ENCODE measurements at regions of chr17 and their contacts with region 1.

Region 1: DNA sequence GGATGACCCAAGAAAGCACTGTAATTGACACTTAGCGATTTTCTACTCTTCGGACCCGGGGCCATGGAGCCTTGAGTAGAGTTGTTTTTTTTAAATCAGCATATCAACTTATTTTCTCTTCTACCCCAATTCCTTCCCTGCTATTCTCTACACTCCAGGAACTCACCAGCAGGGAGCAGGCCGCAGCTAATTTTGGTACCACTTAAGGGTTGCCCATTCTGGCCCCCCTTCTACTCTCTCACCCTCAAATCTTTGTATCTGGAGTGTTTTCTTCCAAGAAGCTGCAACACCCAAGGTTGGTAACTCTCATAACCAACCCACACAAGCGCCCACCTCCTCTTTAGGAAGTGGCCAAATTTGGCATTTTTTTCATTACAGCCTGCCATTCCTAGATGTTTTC is 5.5 kb upstream of the ERAL1 start:
- DNase-seq: no peak
- H3K4me3 ChIP-seq: no peak overlapping the region
- H3K27ac ChIP-seq: no peak overlapping the region
- H3K4me1 ChIP-seq: no peaks in the 10 kb centered on the region; a peak in 1 of 7 replicates
- H3K27me3 ChIP-seq: no peaks in the 10 kb centered on the region
- CTCF ChIP-seq: peak; percentile 1 to 36 (median 26); a peak in 3 of 4 replicates
- EP300 ChIP-seq: no peak
- POLR2A ChIP-seq: no peak
- RAD21 ChIP-seq: peak; percentile 31 to 37

Region 2: DNA sequence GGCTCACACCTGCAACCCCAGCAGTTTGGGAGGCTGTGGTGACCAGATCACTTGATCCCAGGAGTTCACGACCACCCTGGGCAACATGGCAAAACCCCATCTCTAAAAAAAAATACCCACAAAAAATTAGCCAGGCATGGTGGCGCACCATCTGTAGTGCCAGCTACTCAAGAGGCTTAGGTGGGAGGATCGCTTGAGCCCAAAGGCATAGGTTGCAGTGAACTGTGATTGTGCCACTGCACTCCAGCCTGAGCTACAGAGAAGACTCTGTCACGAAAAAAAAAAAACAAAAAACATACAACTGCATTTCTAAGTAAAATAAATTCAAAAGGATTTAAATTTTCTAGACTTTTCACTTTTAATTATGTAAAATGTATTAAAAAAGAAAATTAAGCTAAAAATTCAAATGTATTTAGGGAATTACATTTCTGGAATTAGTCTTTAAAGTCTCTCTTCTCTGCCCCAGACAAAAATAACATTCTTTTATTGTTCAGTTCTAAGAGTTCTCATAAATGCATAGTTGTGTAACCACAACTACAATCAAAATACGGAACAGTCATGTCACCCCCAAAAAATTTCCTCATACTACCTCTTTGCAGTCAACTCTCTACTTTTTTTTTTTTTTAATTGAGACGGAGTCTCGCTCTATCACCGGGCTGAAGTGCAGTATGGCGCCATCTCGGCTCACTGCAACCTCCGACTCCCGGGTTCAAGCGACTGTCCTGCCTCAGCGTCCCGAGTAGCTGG is 20.8 kb before region 1 on chr17:
- CTCF ChIA-PET with region 1: interaction called, 13 read pairs
- POLR2A ChIA-PET with region 1: no interaction called
- DNase-seq: no peak
- H3K4me3 ChIP-seq: no peak overlapping the region
- H3K27ac ChIP-seq: no peak overlapping the region
- H3K4me1 ChIP-seq: no peaks in the 10 kb centered on the region
- H3K27me3 ChIP-seq: no peaks in the 10 kb centered on the region
- CTCF ChIP-seq: no peak
- EP300 ChIP-seq: no peak
- POLR2A ChIP-seq: no peak
- RAD21 ChIP-seq: no peak

Region 3: GRCh38 chr17:28834420-28834819 is 14.9 kb before region 1 on chr17:
- CTCF ChIA-PET with region 1: interaction called, 11 read pairs
- POLR2A ChIA-PET with region 1: no interaction called
- DNase-seq: no peak
- H3K4me3 ChIP-seq: no peak overlapping the region
- H3K27ac ChIP-seq: no peak overlapping the region
- H3K4me1 ChIP-seq: no peaks in the 10 kb centered on the region
- H3K27me3 ChIP-seq: no peaks in the 10 kb centered on the region
- CTCF ChIP-seq: no peak
- EP300 ChIP-seq: no peak
- POLR2A ChIP-seq: no peak
- RAD21 ChIP-seq: no peak

Region 4: GRCh38 chr17:28861393-28862203 is 12.3 kb after region 1 on chr17:
- CTCF ChIA-PET with region 1: interaction called, 31 read pairs
- POLR2A ChIA-PET with region 1: interaction called, 8 read pairs
- DNase-seq: no peak
- H3K4me3 ChIP-seq: 0 out of 8 replicates have a peak overlapping the region, but pooled peaks of 1 of the 4 experiments have one; percentile 33
- H3K27ac ChIP-seq: no peak overlapping the region
- H3K4me1 ChIP-seq: peaks cover 0 to 6% (median 0%) of the 10 kb centered on the region in 4 experiments; a peak in 2 of 7 replicates
- H3K27me3 ChIP-seq: no peaks in the 10 kb centered on the region
- CTCF ChIP-seq: no peak
- EP300 ChIP-seq: no peak
- POLR2A ChIP-seq: no peak
- RAD21 ChIP-seq: no peak

Region 5: DNA sequence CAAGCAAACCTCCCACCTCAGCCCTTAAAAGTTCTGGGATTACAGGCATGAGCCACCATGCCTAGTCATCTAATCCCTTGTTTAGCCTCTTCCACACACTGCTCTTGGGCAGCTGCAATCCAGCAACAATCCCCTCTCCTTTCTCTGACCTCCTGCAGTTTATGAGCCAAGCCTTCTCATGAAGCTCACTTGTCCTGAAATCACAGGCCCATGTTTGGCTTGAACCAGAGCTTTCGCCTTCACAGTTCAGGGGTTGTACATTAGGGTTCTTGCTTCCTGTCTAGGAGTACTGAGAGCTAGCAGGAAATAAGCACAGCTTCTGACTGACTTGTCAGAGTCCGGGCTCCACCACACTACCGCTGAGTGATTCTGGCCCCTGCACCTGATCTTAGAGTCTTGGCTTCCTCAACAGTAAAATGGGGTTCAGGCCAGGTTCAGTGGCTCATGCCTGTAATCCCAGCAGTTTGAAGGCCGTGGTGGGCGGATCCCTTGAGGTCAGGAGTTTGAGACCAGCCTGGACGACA is 21.8 kb after region 1 on chr17:
- CTCF ChIA-PET with region 1: interaction called, 15 read pairs
- POLR2A ChIA-PET with region 1: interaction called, 3 read pairs
- DNase-seq: no peak
- H3K4me3 ChIP-seq: no peak overlapping the region
- H3K27ac ChIP-seq: no peak overlapping the region
- H3K4me1 ChIP-seq: no peaks in the 10 kb centered on the region
- H3K27me3 ChIP-seq: peaks cover 0 to 4% (median 0%) of the 10 kb centered on the region in 4 experiments; a peak in 2 of 7 replicates
- CTCF ChIP-seq: no peak
- EP300 ChIP-seq: no peak
- POLR2A ChIP-seq: no peak
- RAD21 ChIP-seq: no peak

Region 6: DNA sequence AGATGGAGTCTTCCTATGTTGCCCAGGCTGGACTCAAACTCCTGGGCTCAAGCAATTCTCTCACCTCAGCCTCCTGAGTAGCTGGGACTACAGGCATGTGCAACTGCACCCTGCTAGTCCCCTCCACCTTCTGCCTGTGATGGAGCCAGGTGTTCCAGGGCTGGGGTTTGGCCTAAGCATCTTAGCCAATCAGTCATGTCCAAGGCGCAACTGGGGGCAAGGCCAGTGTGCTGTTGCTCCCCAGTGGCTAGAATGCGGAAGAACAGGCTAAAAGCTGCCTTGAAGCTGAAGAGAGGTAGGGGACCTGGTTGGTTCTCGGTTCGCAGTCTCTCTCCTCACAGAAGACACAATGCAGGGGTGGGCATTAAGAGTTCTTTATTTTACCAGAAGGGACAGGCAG is 29.7 kb after region 1 on chr17:
- CTCF ChIA-PET with region 1: interaction called, 30 read pairs
- POLR2A ChIA-PET with region 1: interaction called, 3 read pairs
- DNase-seq: peak; percentile 67 to 75
- H3K4me3 ChIP-seq: no peak overlapping the region
- H3K27ac ChIP-seq: no peak overlapping the region
- H3K4me1 ChIP-seq: no peaks in the 10 kb centered on the region; a peak in 3 of 7 replicates
- H3K27me3 ChIP-seq: no peaks in the 10 kb centered on the region; a peak in 1 of 7 replicates
- CTCF ChIP-seq: peak; percentile 81 to 96 (median 85)
- EP300 ChIP-seq: no peak
- POLR2A ChIP-seq: no peak
- RAD21 ChIP-seq: peak; percentile 90 to 94

Region 7: DNA sequence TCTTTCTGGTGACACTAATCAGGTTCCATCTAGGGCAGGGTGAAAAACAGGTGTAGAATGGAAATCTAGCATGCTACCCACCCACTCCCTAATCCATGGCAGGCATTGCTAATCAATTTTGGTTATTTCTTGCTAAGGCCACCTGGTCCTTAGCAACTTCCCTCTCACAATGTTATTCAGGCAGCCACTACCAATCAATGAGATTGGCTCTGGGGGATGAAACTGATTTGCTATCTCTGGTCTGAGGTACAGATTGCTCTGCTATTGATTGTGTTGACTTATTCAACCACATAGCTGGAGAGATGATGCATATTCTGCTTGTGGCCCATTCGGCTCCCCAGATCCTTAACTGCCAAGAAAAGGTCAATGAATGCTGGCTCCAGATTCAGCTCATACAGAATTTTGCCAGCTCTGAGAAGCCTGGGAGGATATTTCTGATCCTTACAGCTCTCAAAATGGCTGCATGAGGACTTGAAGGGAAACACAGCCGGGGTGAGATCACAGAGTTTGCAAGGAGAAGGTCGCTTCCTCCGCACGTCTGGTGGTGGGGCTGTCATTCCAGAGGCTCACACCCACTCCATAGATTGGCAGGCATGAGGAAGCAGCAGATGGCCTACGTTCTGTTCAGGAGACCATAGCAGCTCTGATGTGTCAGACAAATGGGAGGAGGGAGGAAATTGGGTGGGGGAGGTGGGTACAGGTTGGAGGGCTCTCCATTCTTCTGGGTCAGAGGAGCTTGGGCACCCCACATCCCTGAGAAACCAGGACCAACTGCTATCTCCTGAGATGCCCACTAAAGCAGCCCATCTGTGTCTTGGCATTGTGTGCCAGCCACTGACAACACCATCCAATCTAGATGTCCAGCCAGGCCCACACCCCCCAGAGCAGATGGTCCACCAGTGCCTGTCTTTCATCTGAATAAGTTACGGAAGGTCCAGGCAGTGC is 134.3 kb after region 1 on chr17:
- CTCF ChIA-PET with region 1: no interaction called
- POLR2A ChIA-PET with region 1: no interaction called
- DNase-seq: no peak
- H3K4me3 ChIP-seq: no peak overlapping the region
- H3K27ac ChIP-seq: no peak overlapping the region
- H3K4me1 ChIP-seq: peaks cover 14 to 18% (median 16%) of the 10 kb centered on the region in 4 experiments
- H3K27me3 ChIP-seq: no peaks in the 10 kb centered on the region; a peak in 1 of 7 replicates
- CTCF ChIP-seq: no peak
- EP300 ChIP-seq: no peak
- POLR2A ChIP-seq: no peak
- RAD21 ChIP-seq: no peak